ENCODE measurements at regions of chr17 and their contacts with region 1.

Region 1: GRCh38 chr17:81512560-81513371 is at the start of gene ACTG1:
- H3K4me3 ChIP-seq: peak within 1 kb of the TSS; percentile 92
- H3K27ac ChIP-seq: peak within 1 kb of the TSS; percentile 100
- H3K4me1 ChIP-seq: peaks cover 17% of the 10 kb centered on the region
- CTCF ChIP-seq: no peak

Region 2: DNA sequence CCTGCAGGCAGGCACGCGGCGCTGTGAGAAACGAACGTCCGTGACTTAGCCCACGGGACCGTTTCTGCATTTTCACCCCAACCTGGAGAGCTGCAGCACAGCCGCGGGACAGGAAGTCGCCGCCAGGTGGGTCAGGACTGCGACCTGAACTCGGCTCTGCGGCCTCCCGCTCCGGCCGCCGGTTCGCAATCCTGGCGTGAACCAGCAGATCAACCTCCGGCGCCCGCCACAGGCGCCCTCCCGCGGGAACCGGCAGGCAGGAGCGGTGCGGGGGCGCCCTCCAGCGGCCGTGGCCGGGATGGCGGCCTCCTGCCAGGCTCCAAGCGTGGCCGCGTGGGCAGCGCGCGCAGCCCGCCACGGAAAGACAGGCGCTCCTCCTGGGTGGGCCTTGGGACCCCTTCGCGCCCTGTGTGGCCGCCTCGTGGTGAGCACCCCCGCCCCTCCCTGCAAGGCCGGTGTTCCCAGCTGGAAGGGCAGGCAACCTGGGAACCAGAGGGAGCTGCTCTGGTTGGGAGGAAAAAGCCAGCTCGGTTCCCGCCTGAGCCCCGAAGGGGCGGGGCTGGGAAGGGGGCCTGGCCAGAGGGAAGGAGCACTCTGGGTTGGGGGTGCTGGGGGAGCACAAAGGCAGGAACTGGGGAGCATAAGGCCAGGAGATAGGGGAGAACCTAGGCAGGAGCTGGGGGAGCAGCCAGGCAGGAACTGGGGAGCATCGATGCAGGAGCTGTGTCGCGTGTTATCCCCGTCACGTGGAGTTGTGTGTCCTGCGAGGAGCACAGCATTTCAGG is 28.4 kb before region 1 on chr17:
- CTCF ChIA-PET with region 1: interaction called, 11 read pairs
- POLR2A ChIA-PET with region 1: interaction called, 27 read pairs
- H3K4me3 ChIP-seq: peak overlapping the region; percentile 45
- H3K27ac ChIP-seq: peak overlapping the region; percentile 24; the same call in 1 of the 2 replicates
- H3K4me1 ChIP-seq: peaks cover 8% of the 10 kb centered on the region
- CTCF ChIP-seq: peak; percentile 93

Region 3: DNA sequence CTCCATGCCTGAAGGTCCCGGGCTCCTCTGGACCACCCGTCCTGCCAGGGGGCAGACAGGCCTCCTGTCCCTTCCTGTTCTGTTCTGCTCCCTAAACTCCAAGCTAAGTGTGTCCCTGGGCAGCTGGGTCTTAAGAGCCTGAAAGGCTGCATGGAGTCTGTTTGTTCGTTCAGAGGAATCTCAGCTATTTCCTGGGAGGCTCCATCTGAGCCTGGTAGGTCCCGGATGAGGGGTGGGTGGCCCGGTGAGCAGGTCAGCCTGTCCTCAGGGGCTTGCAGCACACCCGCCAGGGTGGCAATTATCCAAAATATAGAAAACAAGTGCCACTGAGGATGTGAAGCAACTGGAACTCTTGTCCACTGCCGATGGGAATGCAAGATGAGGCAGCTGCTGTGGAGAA is 12.7 kb before region 1 on chr17:
- CTCF ChIA-PET with region 1: no interaction called
- POLR2A ChIA-PET with region 1: interaction called, 22 read pairs
- H3K4me3 ChIP-seq: no peak overlapping the region
- H3K27ac ChIP-seq: no peak overlapping the region
- H3K4me1 ChIP-seq: no peaks in the 10 kb centered on the region
- CTCF ChIP-seq: no peak

Region 4: DNA sequence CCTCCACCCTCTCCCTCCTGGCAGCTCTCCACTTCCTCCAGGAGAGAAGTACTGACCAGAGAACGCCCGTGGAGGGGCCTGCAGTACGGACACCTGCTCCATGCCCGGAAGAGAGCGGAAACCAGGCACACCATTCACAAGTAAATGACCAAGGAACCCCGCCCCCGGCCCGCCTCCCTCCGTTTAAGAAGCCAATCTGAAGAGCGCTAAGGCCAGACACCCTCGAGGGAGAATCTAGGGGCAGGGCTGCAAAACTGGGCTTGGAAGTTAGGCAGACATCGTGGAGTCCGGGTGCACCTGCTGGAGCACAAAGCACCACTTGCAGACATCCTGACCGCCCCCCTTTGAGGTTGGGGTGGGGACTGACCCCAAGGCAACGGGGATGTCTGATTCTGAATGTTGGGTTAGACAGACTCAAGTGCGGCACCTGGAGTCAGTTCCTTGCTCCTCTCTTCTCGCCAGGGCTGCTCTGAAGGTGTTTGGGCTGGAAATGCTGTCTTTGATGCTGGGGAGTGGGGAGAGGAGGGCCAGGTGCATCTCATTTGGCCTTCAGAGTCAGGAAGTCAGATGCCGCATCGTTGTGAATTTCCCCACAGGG is 40.4 kb after region 1 on chr17:
- CTCF ChIA-PET with region 1: interaction called, 3 read pairs
- POLR2A ChIA-PET with region 1: interaction called, 48 read pairs
- H3K4me3 ChIP-seq: peak overlapping the region; percentile 86
- H3K27ac ChIP-seq: peak overlapping the region; percentile 74
- H3K4me1 ChIP-seq: peaks cover 12% of the 10 kb centered on the region
- CTCF ChIP-seq: peak; percentile 46; the same call in 1 of the 2 replicates

Region 5: GRCh38 chr17:81683584-81684237 is 170.9 kb after region 1 on chr17 and contains the starts of genes ARL16 and HGS:
- CTCF ChIA-PET with region 1: no interaction called
- POLR2A ChIA-PET with region 1: interaction called, 15 read pairs
- H3K4me3 ChIP-seq: peak within 1 kb of the TSS; percentile 92
- H3K27ac ChIP-seq: peak within 1 kb of the TSS; percentile 82
- H3K4me1 ChIP-seq: peaks cover 4% of the 10 kb centered on the region
- CTCF ChIP-seq: no peak

Measured in HEK293 (cell line).